ENCODE measurements at regions of chr10 and their contacts with region 1.

Region 1: DNA sequence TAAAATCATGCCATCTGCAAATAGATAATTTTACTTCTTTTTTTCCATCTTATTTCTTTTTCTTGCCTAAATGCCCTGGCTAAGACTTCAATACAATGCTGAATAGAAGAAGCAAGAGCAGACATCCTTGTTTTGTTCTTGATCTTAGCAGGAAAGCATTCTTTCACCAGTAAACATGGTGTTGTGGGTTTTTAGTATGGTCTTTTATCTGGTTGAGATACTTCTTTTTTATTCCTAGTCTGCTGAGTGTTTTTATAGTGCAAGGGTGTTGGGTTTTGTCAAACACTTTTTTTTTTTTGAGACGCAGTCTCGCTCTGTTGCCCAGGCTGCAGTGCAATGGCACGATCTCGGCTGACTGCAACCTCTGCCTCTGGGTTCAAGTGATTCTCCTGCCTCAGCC is 232.3 kb downstream of the DNAJC1 start:
- DNase-seq: no peak
- H3K4me3 ChIP-seq: no peak overlapping the region
- H3K27ac ChIP-seq: no peak overlapping the region
- H3K4me1 ChIP-seq: no peaks in the 10 kb centered on the region
- H3K27me3 ChIP-seq: no peaks in the 10 kb centered on the region
- CTCF ChIP-seq: no peak
- POLR2A ChIP-seq: no peak

Region 2: DNA sequence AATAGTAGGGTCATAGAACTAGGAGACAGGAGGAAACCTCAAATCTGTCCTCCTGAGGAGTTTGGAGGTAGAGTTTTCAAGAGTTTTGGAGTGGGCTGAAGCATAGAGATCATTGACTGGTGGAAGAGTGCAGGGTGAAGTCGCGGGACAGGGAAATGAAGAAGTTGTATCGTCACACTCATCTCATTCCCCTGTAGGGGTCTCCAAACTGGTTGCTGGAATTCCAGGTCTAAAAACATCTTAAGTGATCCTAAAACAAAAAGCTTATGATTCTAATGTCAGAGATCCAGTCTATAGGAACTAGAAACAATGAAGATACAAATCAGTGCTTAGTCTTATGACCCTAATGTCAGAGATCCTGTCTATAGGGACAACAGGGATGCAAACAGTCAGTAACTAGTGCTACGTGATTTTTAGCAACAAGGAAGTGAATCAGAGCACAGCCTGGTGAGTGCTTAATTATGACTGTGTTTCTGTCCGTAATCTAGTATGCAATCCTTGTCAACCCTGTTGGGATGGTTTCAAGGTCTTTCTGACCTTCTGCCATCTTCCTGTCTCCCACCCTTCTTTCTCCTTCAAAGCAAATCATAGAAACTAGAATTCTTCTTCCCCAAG is 385.1 kb before region 1 on chr10:
- intact Hi-C with region 1: no loop called
- DNase-seq: no peak
- H3K4me3 ChIP-seq: no peak overlapping the region
- H3K27ac ChIP-seq: no peak overlapping the region
- H3K4me1 ChIP-seq: no peaks in the 10 kb centered on the region
- H3K27me3 ChIP-seq: no peaks in the 10 kb centered on the region
- CTCF ChIP-seq: no peak
- POLR2A ChIP-seq: no peak

Region 3: DNA sequence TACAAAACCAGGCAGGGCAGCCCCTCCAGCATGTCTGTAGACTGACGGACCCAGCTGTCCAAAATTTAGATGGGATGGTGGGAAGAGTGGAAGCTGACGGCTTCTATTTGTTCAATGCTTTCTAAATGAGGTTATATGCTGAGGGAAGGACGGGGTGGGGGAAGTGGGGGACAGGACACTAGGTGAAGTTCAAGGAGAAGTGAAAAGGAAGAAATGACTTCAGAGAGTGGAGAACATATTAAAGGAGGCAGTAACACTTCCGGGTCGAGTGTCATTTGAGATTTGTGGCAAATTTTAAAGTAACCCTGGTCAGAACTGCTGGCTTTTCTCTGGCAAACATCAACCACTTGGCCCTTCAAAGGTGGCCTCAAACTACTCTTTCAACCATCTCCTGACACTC is 933.7 kb after region 1 on chr10:
- intact Hi-C with region 1: loop called (anchors 5 kb)
- DNase-seq: no peak
- H3K4me3 ChIP-seq: no peak overlapping the region
- H3K27ac ChIP-seq: no peak overlapping the region
- H3K4me1 ChIP-seq: no peaks in the 10 kb centered on the region
- H3K27me3 ChIP-seq: no peaks in the 10 kb centered on the region
- CTCF ChIP-seq: no peak
- POLR2A ChIP-seq: no peak